SK-N-SH (cell line): ENCODE measurements at regions of chr1 and their contacts with region 1.

Region 1: GRCh38 chr1:48572646-48573261 is 100.8 kb upstream of the SPATA6 start:
- DNase-seq: peak; percentile 80
- H3K4me3 ChIP-seq: peak overlapping the region in 1 of 2 experiments; percentile 46; a peak in 1 of 4 replicates
- H3K27ac ChIP-seq: no peak overlapping the region
- H3K4me1 ChIP-seq: peaks cover 0 to 4% of the 10 kb centered on the region in 2 experiments; a peak in 1 of 4 replicates
- H3K27me3 ChIP-seq: no peaks in the 10 kb centered on the region
- CTCF ChIP-seq: peak; percentile 78
- EP300 ChIP-seq: no peak
- RAD21 ChIP-seq: peak; percentile 100

Region 2: GRCh38 chr1:48688102-48688760 is 115.5 kb after region 1 on chr1:
- CTCF ChIA-PET with region 1: interaction called, 12 read pairs
- POLR2A ChIA-PET with region 1: no interaction called
- DNase-seq: peak; percentile 36
- H3K4me3 ChIP-seq: no peak overlapping the region
- H3K27ac ChIP-seq: no peak overlapping the region
- H3K4me1 ChIP-seq: peaks cover 0 to 2% of the 10 kb centered on the region in 2 experiments; a peak in 1 of 4 replicates
- H3K27me3 ChIP-seq: peaks cover 6% of the 10 kb centered on the region; the same call in 1 of the 2 replicates
- CTCF ChIP-seq: peak; percentile 53
- EP300 ChIP-seq: no peak
- RAD21 ChIP-seq: no peak

Region 3: DNA sequence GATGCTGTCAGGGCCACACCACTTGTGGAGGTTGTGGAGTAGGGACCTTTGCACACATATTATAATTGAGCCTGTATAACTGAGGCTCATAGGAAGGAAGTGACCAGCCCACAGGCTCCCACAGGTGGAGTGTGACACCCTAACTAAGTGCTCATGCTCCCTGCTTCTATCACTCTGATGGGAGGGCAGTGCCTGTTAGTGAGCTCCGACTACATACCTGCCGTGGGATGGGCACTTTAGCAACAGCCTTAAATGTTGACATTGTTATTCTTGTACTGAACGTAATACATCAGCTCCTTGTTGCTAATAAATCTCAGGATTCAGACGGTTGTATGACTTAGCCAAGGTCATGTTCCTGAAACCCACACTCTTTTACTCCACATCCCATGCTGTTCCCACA is 146.0 kb after region 1 on chr1:
- CTCF ChIA-PET with region 1: interaction called, 11 read pairs
- POLR2A ChIA-PET with region 1: no interaction called
- DNase-seq: no peak
- H3K4me3 ChIP-seq: no peak overlapping the region
- H3K27ac ChIP-seq: no peak overlapping the region
- H3K4me1 ChIP-seq: no peaks in the 10 kb centered on the region; a peak in 1 of 4 replicates
- H3K27me3 ChIP-seq: no peaks in the 10 kb centered on the region
- CTCF ChIP-seq: no peak
- EP300 ChIP-seq: no peak
- RAD21 ChIP-seq: no peak

Region 4: DNA sequence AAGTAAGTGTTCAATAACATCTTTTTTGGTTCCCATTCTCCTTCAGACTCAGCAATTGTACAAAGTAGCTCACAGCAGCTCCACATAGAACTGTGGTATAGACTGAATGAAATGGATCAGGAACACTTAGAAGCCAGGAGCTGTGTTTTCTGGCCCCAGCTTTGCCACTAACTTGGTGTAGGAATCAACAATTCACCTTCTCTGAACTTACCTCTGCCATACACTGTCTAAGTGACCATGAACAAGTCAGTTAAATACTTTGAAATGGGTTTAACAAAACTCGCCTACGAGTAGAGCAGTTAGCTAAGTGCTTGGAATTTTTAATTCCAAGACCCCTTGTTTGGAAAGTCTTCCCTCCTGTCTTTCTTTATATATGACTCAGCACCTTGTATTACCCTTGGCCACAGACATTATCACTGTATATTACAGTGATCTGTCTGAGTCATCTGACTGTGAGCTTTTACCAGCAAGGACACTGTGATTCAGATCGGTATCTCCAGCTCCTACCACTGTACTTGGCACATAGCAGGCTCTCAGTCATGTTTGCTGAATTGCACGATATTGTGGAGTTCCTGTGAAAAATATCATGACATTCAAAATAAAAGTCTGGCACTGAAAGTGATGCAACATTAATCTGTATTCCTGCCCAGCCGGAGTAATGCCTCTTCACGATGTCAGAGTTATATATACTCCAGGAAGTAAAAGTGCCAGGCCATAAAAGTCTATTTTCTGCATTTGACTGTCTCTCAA is 305.6 kb after region 1 on chr1:
- CTCF ChIA-PET with region 1: interaction called, 12 read pairs
- POLR2A ChIA-PET with region 1: no interaction called
- DNase-seq: peak; percentile 30
- H3K4me3 ChIP-seq: peak overlapping the region; percentile 10 to 35; a peak in 2 of 4 replicates
- H3K27ac ChIP-seq: peak overlapping the region; percentile 88 to 89
- H3K4me1 ChIP-seq: peaks cover 24 to 34% of the 10 kb centered on the region in 2 experiments; a peak in 3 of 4 replicates
- H3K27me3 ChIP-seq: no peaks in the 10 kb centered on the region
- CTCF ChIP-seq: no peak
- EP300 ChIP-seq: peak; percentile 56 to 92
- RAD21 ChIP-seq: peak; percentile 6; the same call in 1 of the 2 replicates

Region 5: DNA sequence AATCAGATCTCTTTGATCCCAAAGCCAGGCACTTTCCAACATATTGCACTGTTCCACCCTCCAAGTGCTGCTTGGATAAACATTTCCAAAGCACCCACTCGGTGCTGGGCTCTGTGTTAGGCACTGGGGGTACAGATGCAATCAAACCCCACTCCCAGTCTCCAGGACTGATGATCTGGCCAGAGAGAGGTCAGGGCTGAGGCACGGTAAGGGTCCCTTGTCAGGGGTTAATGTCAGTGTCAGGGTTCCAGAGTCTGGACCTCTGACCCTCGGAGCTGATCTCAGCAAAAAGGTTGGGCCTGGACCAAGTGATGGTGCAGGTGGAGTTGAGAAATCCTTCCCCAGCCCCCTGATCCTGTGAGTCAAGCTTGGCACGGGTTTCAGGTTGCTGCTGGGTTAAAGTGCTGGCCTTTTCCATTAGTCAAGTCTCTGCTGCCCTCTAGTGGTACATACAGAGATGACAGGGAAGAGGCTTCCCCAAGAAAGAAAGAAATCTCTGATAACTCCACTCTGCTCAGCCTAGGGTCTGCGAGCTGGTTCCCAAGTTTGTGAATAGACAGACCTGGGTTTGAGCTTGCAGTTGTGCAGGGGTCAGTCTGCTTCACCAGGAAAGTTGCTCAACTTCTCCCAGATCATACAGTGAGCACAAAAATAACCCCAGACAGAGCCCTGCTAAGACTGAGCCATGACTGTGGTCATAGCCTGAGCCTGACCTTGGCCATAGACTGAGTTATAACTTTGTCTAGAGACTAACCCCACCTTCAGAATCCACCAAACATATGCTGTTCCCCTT is 1775.9 kb after region 1 on chr1:
- CTCF ChIA-PET with region 1: interaction called, 26 read pairs
- POLR2A ChIA-PET with region 1: no interaction called
- DNase-seq: peak; percentile 77
- H3K4me3 ChIP-seq: no peak overlapping the region
- H3K27ac ChIP-seq: peak overlapping the region in 1 of 2 experiments; percentile 48; a peak in 1 of 4 replicates
- H3K4me1 ChIP-seq: peaks cover 0 to 23% of the 10 kb centered on the region in 2 experiments; a peak in 2 of 4 replicates
- H3K27me3 ChIP-seq: no peaks in the 10 kb centered on the region
- CTCF ChIP-seq: peak; percentile 82
- EP300 ChIP-seq: peak in 1 of 2 experiments; percentile 30; a peak in 1 of 4 replicates
- RAD21 ChIP-seq: peak; percentile 99